Cardiac septum (tissue), 1 donor: ENCODE measurements at regions of chr2 and their contacts with region 1.

Region 1: DNA sequence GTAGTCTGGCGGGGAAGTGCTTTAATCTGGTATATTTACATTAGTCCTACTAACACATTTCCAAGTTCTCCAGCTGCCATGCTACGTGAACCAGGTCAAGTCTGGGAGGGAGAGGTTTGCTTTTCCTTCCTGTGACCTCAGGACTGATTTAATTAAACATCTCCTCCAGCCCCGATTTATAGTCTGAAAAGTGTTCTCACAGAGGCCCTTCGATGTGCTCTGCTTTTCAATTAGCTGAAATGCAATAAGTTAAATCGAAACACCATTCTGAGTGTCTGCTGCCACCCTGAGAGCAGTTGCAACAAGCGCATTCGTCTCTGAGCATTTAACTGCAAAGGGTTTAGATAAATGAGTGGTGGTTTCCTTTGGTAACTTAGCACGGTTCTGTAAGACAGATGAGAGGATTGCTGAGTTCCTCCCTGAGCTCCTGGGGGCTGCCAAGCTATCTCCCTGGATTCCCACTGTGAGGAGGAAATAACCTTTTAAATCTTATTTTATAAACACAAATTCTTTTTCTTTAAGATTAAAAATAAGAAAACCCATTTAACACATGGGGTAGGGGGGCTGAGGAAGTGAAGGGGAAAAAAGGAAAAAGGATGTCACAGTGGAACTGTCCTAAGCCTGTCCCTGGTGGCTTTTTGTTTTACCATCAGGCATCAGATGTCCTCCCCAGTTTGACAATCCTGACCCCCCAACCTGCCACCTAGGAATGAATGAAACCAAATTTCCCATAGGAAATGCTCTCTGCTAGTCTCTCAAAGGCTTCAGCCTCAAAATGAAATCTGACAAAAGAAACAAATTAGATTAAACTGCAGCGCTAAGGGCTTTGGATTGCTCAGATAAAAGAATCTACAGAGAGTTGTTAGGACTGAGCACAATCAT is 56.5 kb upstream of the CREB1 start:
- DNase-seq: no peak

Region 2: DNA sequence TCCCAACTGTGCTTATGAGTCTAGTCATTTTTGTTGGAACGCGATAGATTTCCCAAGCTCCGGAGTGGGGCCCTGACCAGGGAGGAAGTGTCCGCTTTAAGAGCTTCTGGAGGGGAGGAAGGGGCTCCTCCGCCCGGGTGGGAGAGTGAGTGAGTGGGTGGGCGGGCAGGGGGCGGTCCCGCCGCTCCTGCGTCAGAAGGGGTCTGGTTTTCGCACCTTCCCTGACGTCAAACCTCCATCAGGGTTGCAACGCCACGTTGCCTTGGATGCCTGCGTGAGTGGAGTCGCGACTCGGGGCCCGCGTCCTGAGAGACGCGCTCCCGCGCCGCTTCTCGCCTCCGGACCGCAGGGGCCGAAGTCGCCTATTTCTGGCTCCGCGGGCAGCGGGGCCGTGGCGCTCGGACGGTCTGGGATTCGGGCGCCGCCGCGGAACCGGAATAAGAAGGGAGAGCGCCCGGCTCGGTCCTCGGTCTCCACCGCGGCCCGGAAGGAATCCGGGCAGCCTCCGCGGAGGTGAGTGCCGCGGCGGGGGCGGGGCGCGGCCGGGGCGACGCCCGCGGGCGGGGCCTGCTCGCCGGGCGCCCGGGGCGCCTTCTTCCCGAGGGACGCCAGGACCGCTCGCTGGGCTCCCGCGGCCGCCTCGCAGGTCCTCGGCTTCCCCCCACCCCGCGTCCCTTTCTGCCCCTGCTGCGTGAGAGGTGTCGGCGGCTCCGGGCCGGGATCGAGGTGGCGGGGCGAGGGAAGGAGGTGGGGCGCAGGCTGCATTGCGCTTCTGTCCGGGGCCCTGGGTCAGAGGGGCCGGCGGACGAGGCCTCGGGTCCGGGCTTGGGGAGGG is 1198.6 kb before region 1 on chr2 and contains the start of gene ZDBF2:
- intact Hi-C with region 1: no loop called
- DNase-seq: no peak
- total RNA-seq, gene ZDBF2: 15.4 TPM

Region 3: GRCh38 chr2:206693399-206694137 is 779.7 kb before region 1 on chr2:
- intact Hi-C with region 1: loop called (anchors 2 kb)
- DNase-seq: no peak

Region 4: DNA sequence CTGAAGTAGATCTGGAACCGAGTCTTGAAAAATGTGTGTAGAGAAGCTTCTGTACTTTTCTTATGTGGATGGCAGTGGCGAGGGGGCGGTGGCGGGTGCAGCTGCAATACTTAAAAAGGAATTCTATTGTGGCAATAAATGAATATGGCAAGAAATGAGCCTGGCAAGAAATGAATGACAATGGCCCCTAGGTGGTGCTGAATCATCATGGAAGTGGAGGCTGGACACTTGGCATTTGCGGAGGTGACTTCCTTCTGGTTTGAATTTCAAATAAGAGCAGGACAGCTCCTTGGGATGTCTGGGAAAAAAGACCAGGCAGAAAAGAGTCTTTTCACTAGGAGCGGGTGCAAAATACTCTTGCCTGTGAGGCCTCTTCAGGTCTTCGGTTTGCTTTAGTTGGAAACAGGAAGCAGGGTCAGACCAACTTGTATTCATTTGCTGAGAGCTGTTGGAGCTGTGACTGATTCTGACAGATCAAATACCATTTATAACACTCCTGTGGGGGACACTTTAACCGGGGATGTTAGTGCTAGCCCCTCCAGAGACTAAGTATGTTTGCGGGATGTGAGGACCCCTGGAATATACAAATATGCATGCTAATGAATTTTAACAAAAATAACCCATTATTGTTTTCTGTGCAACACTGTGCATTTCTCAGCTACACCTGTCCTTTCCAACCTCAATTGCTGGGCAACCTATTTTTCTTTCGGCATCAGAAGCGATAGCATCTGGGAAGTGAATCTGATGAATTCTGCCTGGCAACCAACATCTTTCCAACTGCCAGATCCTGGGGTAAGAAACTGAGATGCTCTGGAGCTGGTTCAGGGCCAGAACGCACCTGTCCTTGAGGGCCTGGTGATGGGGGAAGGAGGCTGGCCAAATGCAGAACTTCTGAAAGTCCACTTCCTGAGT is 672.5 kb before region 1 on chr2:
- intact Hi-C with region 1: loop called (anchors 2 kb)
- DNase-seq: no peak

Region 5: GRCh38 chr2:206981739-206982340 is 491.4 kb before region 1 on chr2:
- intact Hi-C with region 1: loop called (anchors 1 kb)
- DNase-seq: peak; percentile 85

Region 6: DNA sequence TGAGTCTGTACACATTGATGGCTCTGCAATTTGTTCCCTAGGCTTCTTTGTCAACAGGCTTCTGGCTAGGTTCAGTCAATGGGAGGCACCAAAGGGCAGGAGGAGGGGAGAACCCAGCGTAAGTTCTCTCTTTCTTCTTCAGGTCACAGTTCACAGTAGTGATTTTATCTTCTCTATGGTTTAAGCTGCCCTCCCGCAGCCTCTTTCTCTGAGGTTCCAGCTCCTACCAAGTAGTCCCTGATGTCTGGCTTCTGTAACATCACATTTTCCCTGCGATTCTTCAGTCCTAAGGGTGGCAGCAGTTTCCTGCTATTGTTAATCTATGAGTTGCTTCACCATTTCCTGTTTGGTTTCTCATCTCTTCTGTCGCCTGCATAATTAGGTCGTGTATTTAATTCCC is 426.6 kb before region 1 on chr2:
- intact Hi-C with region 1: loop called (anchors 5 kb)
- DNase-seq: no peak

Region 7: DNA sequence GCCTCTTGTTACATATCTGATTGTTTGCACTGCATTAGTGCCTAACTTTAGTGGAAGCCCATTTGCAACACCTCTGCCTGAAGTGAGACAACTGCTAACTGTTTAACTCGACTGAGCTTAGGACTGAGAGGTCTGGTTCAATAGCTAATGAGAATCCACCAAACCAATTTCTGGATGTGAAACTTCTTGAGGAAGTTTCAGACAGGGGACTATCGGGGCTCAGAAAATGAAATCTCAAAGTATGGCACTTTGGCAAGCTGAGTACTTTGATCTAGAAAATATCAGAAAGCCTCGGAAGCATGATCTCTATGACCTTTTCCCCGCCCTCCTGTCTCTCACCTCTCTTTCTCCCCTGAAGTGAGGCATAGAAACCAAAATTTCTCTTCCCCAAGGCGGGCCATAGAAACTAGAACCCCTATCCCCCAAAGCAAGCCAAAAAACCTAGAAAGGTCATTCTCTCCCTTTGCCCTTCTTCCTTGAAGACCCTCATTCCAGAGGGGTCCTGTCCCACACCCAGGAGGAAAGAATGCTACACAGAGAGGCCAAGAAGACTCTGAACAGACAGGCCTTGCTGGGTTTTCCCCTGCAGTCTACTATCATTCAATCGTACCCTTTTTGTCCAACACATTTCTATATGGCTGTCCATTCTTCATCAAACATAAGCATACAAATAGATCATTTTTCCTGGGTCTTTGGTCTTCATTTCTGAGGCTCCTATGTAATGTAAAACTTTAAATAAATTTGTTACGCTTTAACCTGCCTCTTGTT is 13.1 kb before region 1 on chr2:
- intact Hi-C with region 1: no loop called
- DNase-seq: no peak

Region 8: DNA sequence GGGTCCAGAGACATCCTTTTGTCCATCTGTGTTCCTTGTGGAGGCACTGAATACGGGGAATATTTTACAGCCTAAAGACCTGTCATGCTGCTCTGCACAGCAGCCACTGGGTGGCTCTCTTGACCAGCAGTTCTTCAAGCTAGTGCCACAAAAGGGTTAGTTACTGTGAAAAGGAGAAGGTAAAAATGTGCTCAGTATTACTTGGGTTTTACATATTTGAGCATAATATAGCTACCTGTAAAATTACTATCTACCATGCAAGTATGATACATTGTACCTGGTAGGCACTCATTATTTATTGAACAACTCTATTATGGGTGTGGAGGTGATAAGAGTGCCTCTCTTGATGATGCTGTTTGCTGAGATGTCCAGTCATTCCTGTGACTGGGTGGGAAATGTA is 272.8 kb after region 1 on chr2:
- intact Hi-C with region 1: no loop called
- DNase-seq: no peak